HepG2 (cell line): ENCODE measurements at regions of chr20 and their contacts with region 1.

Region 1: GRCh38 chr20:47453142-47453782 is 48.4 kb upstream of the NCOA3 start:
- DNase-seq: peak; percentile 85
- ATAC-seq: no peak
- H3K4me3 ChIP-seq: no peak overlapping the region
- H3K27ac ChIP-seq: peak overlapping the region; percentile 83
- H3K4me1 ChIP-seq: peaks cover 93% of the 10 kb centered on the region
- H3K27me3 ChIP-seq: no peaks in the 10 kb centered on the region
- CTCF ChIP-seq: no peak
- EP300 ChIP-seq: peak in 1 of 2 experiments; percentile 81; a peak in 2 of 4 replicates
- POLR2A ChIP-seq: no peak
- RAD21 ChIP-seq: no peak

Region 2: DNA sequence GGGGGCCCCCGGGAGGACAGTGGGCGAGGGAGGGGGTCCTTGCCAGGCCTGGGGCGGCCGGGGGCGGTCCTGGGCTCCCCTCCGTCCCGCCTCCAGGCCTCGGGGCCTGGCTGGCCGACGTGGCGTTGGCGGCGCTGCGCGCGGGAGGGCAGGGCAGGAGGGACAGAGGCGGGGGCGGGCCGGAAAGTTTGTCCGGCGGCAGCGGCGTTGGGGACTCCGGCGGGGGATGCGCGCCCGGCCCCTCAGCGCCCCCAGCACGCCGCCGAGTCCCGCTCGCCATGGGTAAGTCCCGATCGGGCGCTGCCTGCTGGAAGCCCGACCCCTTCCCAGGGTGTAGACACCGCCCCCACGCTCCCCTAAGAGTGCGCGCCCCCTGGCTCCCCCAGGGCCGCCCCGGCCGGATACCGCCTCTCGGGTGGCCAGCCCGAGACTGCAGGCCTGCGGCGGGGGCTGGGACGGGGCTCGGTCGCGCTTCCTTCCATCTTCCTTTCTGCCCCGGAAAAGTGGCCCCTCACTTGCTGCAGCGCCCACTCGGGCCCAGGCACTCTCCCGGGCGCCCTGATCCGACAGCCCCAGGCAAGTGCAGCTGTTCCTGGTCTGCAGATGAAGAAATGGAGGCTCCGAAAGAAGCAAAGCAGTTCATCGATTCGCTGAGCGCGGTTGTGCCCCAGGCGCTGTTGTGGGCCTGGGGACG is 743.7 kb before region 1 on chr20 and contains the start of gene SLC2A10:
- CTCF ChIA-PET with region 1: no interaction called
- POLR2A ChIA-PET with region 1: no interaction called
- in situ Hi-C with region 1: no loop called
- intact Hi-C with region 1: no loop called
- DNase-seq: peak; percentile 53
- ATAC-seq: peak; percentile 86
- H3K4me3 ChIP-seq: peak within 1 kb of the TSS; percentile 69 to 92 (median 70)
- H3K27ac ChIP-seq: peak within 1 kb of the TSS; percentile 71
- H3K4me1 ChIP-seq: peaks cover 74% of the 10 kb centered on the region
- H3K27me3 ChIP-seq: no peaks in the 10 kb centered on the region; a peak in 2 of 5 replicates
- CTCF ChIP-seq: peak; percentile 58
- EP300 ChIP-seq: peak in 1 of 2 experiments; percentile 8; a peak in 1 of 4 replicates
- POLR2A ChIP-seq: peak; percentile 63 to 82
- RAD21 ChIP-seq: peak; percentile 60
- total RNA-seq, gene SLC2A10: 9.6 and 16.0 TPM in 2 replicates

Region 3: DNA sequence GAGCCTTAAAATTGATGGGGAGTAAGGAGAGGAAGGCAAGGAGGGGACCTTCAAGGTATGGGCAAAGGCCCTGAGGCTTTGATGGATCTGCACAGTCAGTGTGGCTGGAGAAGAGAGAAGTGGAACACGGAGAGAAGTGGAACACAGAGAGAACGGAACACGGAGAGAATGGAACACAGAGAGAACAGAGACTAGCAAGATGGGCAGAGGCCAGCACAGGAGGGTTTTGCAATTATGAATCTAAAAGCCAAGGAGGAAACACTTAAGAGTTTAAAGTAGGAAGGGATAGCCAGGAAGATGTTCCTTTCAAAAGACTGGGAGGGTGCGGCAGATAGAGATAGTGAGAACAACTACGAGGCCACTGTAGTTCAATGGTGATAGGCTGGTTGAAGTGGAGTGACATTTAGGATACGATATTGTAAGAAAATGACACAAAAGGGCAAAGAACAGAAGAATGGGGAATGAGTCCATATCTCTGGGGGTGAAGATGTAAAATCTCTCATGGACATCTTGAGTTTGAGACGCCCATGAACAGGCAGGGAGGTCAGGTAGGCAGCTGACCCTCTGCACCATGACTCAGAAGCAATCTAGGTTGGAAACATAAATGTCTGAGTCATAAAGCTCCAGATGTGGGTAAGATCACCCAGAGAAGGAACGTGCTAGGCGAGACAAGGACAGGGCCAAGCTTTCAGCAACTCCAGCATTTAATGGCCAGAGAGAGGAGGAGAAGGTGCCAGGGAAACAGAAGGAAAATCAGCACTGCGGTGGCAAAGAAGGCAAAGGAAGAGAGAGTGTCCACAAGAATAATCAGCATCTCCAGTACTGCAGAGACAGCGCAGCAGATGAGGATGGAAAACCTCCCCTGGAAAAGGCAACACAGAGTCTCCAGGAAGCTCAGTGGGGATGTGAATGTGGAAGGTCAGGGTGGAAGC is 122.1 kb before region 1 on chr20:
- CTCF ChIA-PET with region 1: no interaction called
- POLR2A ChIA-PET with region 1: no interaction called
- in situ Hi-C with region 1: no loop called
- intact Hi-C with region 1: no loop called
- DNase-seq: no peak
- ATAC-seq: no peak
- H3K4me3 ChIP-seq: no peak overlapping the region
- H3K27ac ChIP-seq: peak overlapping the region; percentile 38
- H3K4me1 ChIP-seq: peaks cover 100% of the 10 kb centered on the region
- H3K27me3 ChIP-seq: no peaks in the 10 kb centered on the region
- CTCF ChIP-seq: no peak
- EP300 ChIP-seq: no peak
- POLR2A ChIP-seq: no peak
- RAD21 ChIP-seq: no peak

Region 4: DNA sequence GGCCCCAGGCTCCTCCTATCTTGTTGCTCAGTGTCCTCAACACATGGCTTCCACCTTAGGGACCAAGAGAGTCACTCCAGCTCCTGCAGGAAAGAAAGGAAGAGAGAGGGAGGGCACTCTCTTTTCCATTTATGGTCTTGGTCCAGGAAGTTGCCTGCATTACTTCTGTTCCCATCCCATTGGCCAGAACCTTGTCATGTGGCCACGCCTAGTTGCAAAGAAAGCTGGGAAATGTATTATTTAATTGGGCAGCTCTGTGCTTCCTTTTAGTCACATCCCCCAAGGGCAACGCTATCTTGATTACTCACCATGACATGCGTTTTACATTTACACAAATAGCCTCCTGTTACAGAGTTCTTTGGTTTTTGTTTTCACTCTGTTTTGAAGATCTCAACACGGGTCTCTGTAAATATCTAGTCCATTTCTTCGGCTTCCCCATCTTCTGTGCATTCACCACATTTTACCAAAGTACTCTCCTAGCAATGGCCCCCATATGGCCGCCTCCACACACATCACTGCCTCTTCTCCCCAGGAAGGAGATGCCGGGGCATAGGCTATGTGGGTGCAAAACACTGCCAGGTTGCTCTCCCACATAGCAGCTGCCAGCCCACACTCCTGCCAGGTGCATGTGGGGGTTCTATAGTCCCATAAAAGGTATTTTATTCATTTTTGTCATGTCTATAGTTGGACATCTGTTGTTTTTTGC is 61.1 kb before region 1 on chr20:
- CTCF ChIA-PET with region 1: no interaction called
- POLR2A ChIA-PET with region 1: interaction called, 8 read pairs
- in situ Hi-C with region 1: no loop called
- intact Hi-C with region 1: loop called (anchors 10 kb)
- DNase-seq: peak; percentile 71
- ATAC-seq: peak; percentile 53
- H3K4me3 ChIP-seq: no peak overlapping the region
- H3K27ac ChIP-seq: no peak overlapping the region
- H3K4me1 ChIP-seq: peaks cover 38% of the 10 kb centered on the region
- H3K27me3 ChIP-seq: no peaks in the 10 kb centered on the region
- CTCF ChIP-seq: no peak
- EP300 ChIP-seq: peak in 1 of 2 experiments; percentile 18; a peak in 1 of 4 replicates
- POLR2A ChIP-seq: no peak
- RAD21 ChIP-seq: no peak

Region 5: GRCh38 chr20:47418061-47418912 is 35.0 kb before region 1 on chr20:
- CTCF ChIA-PET with region 1: no interaction called
- POLR2A ChIA-PET with region 1: interaction called, 4 read pairs
- in situ Hi-C with region 1: no loop called
- intact Hi-C with region 1: loop called (anchors 5 kb)
- DNase-seq: peak; percentile 71
- ATAC-seq: peak; percentile 49
- H3K4me3 ChIP-seq: peak overlapping the region in 1 of 3 experiments; percentile 27; a peak in 1 of 6 replicates
- H3K27ac ChIP-seq: peak overlapping the region; percentile 38
- H3K4me1 ChIP-seq: peaks cover 63% of the 10 kb centered on the region
- H3K27me3 ChIP-seq: no peaks in the 10 kb centered on the region
- CTCF ChIP-seq: no peak
- EP300 ChIP-seq: peak in 1 of 2 experiments; percentile 86; a peak in 1 of 4 replicates
- POLR2A ChIP-seq: no peak
- RAD21 ChIP-seq: no peak

Region 6: GRCh38 chr20:47432211-47433210 is 20.8 kb before region 1 on chr20:
- CTCF ChIA-PET with region 1: no interaction called
- POLR2A ChIA-PET with region 1: interaction called, 13 read pairs
- in situ Hi-C with region 1: no loop called
- intact Hi-C with region 1: loop called (anchors 1 kb)
- DNase-seq: peak; percentile 71
- ATAC-seq: no peak
- H3K4me3 ChIP-seq: peak overlapping the region in 2 of 3 experiments; percentile 11 to 28; a peak in 1 of 6 replicates
- H3K27ac ChIP-seq: peak overlapping the region; percentile 25
- H3K4me1 ChIP-seq: peaks cover 67% of the 10 kb centered on the region
- H3K27me3 ChIP-seq: no peaks in the 10 kb centered on the region
- CTCF ChIP-seq: no peak
- EP300 ChIP-seq: no peak
- POLR2A ChIP-seq: no peak
- RAD21 ChIP-seq: no peak

Region 7: GRCh38 chr20:47438577-47439381 is 14.5 kb before region 1 on chr20:
- CTCF ChIA-PET with region 1: no interaction called
- POLR2A ChIA-PET with region 1: interaction called, 5 read pairs
- in situ Hi-C with region 1: no loop called
- intact Hi-C with region 1: loop called (anchors 1 kb)
- DNase-seq: no peak
- ATAC-seq: peak; percentile 53
- H3K4me3 ChIP-seq: no peak overlapping the region
- H3K27ac ChIP-seq: peak overlapping the region; percentile 12
- H3K4me1 ChIP-seq: peaks cover 37% of the 10 kb centered on the region
- H3K27me3 ChIP-seq: no peaks in the 10 kb centered on the region
- CTCF ChIP-seq: no peak
- EP300 ChIP-seq: no peak
- POLR2A ChIP-seq: no peak
- RAD21 ChIP-seq: no peak

Region 8: DNA sequence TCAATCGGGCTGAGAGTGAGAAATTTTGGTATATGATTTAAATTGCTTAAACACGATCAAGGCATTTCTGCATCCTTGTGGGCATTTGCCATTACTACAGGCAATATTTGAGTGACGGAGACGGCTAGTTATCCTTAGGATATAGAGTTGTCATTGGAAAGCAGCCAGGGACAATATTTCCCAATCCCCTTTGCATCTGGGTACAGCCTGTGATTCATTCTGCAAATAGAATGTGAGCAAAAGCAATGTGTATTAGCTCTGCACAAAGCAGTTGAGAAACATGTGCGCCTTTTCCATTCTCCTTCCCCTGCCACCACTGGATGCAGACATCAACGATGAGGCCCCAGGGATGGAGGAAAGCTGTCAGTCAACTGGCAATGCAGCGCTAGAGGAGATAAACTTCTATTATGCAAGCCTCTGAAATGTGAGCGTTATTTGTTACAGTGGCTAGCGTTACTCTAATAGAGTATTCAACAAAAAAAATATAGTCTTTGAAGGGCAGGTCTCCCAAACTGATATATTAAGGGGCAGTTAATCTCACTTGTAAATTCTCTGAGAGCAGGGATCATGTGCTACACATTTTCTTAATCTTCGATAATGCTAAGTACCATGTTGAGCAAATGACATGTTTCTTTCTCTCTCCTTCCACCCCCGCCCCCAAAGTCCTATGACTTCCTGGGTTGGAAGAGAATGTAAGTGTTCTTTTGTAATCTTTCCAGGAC is 11.3 kb after region 1 on chr20:
- CTCF ChIA-PET with region 1: interaction called, 5 read pairs
- POLR2A ChIA-PET with region 1: interaction called, 27 read pairs
- in situ Hi-C with region 1: no loop called
- intact Hi-C with region 1: loop called (anchors 1 kb)
- DNase-seq: peak; percentile 100
- ATAC-seq: peak; percentile 99
- H3K4me3 ChIP-seq: peak overlapping the region in 1 of 3 experiments; percentile 8; a peak in 2 of 6 replicates
- H3K27ac ChIP-seq: peak overlapping the region; percentile 19
- H3K4me1 ChIP-seq: peaks cover 76% of the 10 kb centered on the region
- H3K27me3 ChIP-seq: no peaks in the 10 kb centered on the region
- CTCF ChIP-seq: peak; percentile 66
- EP300 ChIP-seq: peak; percentile 98
- POLR2A ChIP-seq: peak in 1 of 2 experiments; percentile 48; a peak in 1 of 4 replicates
- RAD21 ChIP-seq: peak; percentile 74

Region 9: GRCh38 chr20:47493175-47493962 is 40.1 kb after region 1 on chr20:
- CTCF ChIA-PET with region 1: no interaction called
- POLR2A ChIA-PET with region 1: interaction called, 11 read pairs
- in situ Hi-C with region 1: no loop called
- intact Hi-C with region 1: no loop called
- DNase-seq: peak; percentile 93
- ATAC-seq: peak; percentile 92
- H3K4me3 ChIP-seq: peak overlapping the region; percentile 2 to 47 (median 6); a peak in 2 of 6 replicates
- H3K27ac ChIP-seq: peak overlapping the region; percentile 66
- H3K4me1 ChIP-seq: peaks cover 44% of the 10 kb centered on the region
- H3K27me3 ChIP-seq: no peaks in the 10 kb centered on the region
- CTCF ChIP-seq: no peak
- EP300 ChIP-seq: peak; percentile 15 to 84; a peak in 2 of 4 replicates
- POLR2A ChIP-seq: peak; percentile 40 to 51; a peak in 1 of 4 replicates
- RAD21 ChIP-seq: no peak